HepG2 (cell line): ENCODE measurements at regions of chr19 and their contacts with region 1.

Region 1: GRCh38 chr19:18571564-18572300 is at the start of gene UBA52:
- DNase-seq: peak; percentile 93
- ATAC-seq: peak; percentile 95
- H3K4me3 ChIP-seq: peak within 1 kb of the TSS; percentile 75 to 90 (median 85)
- H3K27ac ChIP-seq: peak within 1 kb of the TSS; percentile 75
- H3K4me1 ChIP-seq: peaks cover 20% of the 10 kb centered on the region
- H3K27me3 ChIP-seq: no peaks in the 10 kb centered on the region; a peak in 1 of 5 replicates
- CTCF ChIP-seq: peak; percentile 48
- EP300 ChIP-seq: peak in 1 of 2 experiments; percentile 41; a peak in 1 of 4 replicates
- POLR2A ChIP-seq: peak; percentile 68 to 88; a peak in 3 of 4 replicates
- RAD21 ChIP-seq: peak; percentile 47
- total RNA-seq, gene UBA52: 959 and 1,184 TPM in 2 replicates

Region 2: GRCh38 chr19:18478569-18479311 is 93.0 kb before region 1 on chr19:
- CTCF ChIA-PET with region 1: no interaction called
- POLR2A ChIA-PET with region 1: interaction called, 3 read pairs
- in situ Hi-C with region 1: no loop called
- intact Hi-C with region 1: loop called (anchors 5 kb)
- DNase-seq: peak; percentile 88
- ATAC-seq: peak; percentile 73
- H3K4me3 ChIP-seq: peak overlapping the region in 2 of 3 experiments; percentile 9 to 45; a peak in 3 of 6 replicates
- H3K27ac ChIP-seq: peak overlapping the region; percentile 90
- H3K4me1 ChIP-seq: peaks cover 79% of the 10 kb centered on the region
- H3K27me3 ChIP-seq: no peaks in the 10 kb centered on the region
- CTCF ChIP-seq: 0 out of 2 replicates have a peak, but pooled peaks have one; percentile 21
- EP300 ChIP-seq: peak in 1 of 2 experiments; percentile 75; a peak in 2 of 4 replicates
- POLR2A ChIP-seq: peak in 1 of 2 experiments; percentile 31; a peak in 2 of 4 replicates
- RAD21 ChIP-seq: peak; percentile 8; the same call in 1 of the 2 replicates

Region 3: DNA sequence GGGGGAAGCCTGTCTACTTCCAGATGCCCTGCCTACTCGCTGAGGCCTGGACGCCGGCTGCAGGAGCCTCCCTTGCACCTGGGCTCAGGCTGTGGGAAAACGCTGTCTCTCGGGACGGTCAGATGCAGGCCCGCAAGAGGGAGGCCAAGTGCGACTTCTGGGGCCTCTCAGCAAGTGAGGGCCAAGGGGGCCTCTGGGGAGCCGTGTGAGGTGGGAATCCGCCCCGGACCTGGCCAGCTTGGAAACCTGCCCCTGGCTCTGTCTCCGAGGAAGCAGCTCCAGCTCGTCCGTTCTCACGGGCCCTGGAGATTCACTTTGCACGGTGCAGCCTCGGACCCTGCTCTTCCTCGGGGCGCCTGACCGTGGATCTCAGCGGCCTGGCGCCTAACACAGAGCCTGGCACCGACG is 100.3 kb after region 1 on chr19:
- CTCF ChIA-PET with region 1: no interaction called
- POLR2A ChIA-PET with region 1: no interaction called
- in situ Hi-C with region 1: no loop called
- intact Hi-C with region 1: no loop called
- DNase-seq: no peak
- ATAC-seq: no peak
- H3K4me3 ChIP-seq: no peak overlapping the region
- H3K27ac ChIP-seq: no peak overlapping the region
- H3K4me1 ChIP-seq: peaks cover 30% of the 10 kb centered on the region
- H3K27me3 ChIP-seq: no peaks in the 10 kb centered on the region; a peak in 1 of 5 replicates
- CTCF ChIP-seq: no peak
- EP300 ChIP-seq: no peak
- POLR2A ChIP-seq: no peak
- RAD21 ChIP-seq: no peak

Region 4: GRCh38 chr19:19033426-19034203 is 461.9 kb after region 1 on chr19 and contains the starts of genes ARMC6 and SUGP2:
- CTCF ChIA-PET with region 1: no interaction called
- POLR2A ChIA-PET with region 1: no interaction called
- in situ Hi-C with region 1: no loop called
- intact Hi-C with region 1: no loop called
- DNase-seq: peak; percentile 74
- ATAC-seq: peak; percentile 86
- H3K4me3 ChIP-seq: peak within 1 kb of the TSS; percentile 91 to 98 (median 93)
- H3K27ac ChIP-seq: peak within 1 kb of the TSS; percentile 98
- H3K4me1 ChIP-seq: peaks cover 41% of the 10 kb centered on the region
- H3K27me3 ChIP-seq: no peaks in the 10 kb centered on the region; a peak in 1 of 5 replicates
- CTCF ChIP-seq: peak; percentile 30
- EP300 ChIP-seq: no peak
- POLR2A ChIP-seq: peak; percentile 73 to 74
- RAD21 ChIP-seq: peak; percentile 28
- total RNA-seq, gene ARMC6: 36.8 and 42.7 TPM in 2 replicates
- total RNA-seq, gene SUGP2: 32.3 and 40.6 TPM in 2 replicates